H1 (cell line): ENCODE measurements at regions of chr13 and their contacts with region 1.

Region 1: DNA sequence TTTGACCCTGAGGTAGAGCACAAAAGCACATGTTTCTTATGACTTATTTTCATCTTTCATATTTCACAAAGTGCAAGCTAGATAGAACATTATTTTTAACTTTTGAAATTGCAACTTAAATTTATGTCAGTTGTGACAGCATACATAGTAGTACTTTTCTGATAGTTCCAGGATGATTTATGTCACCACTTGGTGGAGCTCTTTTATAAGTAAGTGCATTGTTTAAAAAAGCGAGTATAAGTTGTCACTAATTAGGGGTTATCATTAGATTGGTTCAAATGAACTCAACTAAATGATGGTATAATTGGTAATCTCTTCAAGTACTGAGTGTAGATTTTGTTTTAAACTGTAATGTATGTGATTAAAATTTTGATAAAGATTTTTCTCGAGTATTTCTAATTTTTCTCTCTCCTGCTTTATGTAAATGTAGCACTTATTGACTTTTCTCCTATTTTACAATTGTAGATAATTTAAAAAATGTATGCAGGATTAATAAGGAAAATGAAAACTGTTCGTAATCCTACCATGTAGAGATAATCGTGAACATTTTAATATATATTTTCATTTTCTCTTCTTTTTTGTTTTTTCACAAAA is 31.1 kb downstream of the RB1 start:
- DNase-seq: no peak
- H3K4me3 ChIP-seq: no peak overlapping the region
- H3K27ac ChIP-seq: no peak overlapping the region
- H3K4me1 ChIP-seq: no peaks in the 10 kb centered on the region
- H3K27me3 ChIP-seq: no peaks in the 10 kb centered on the region
- CTCF ChIP-seq: peak in 2 of 3 experiments; percentile 33 to 44; a peak in 2 of 4 replicates
- EP300 ChIP-seq: no peak
- POLR2A ChIP-seq: no peak
- RAD21 ChIP-seq: peak in 1 of 2 experiments; percentile 67

Region 2: GRCh38 chr13:48400850-48401291 is 66.2 kb after region 1 on chr13:
- CTCF ChIA-PET with region 1: no interaction called
- POLR2A ChIA-PET with region 1: no interaction called
- DNase-seq: no peak
- H3K4me3 ChIP-seq: no peak overlapping the region
- H3K27ac ChIP-seq: no peak overlapping the region
- H3K4me1 ChIP-seq: no peaks in the 10 kb centered on the region
- H3K27me3 ChIP-seq: no peaks in the 10 kb centered on the region
- CTCF ChIP-seq: no peak
- EP300 ChIP-seq: no peak
- POLR2A ChIP-seq: no peak
- RAD21 ChIP-seq: no peak

Region 3: GRCh38 chr13:48571126-48571913 is 236.7 kb after region 1 on chr13:
- CTCF ChIA-PET with region 1: interaction called, 105 read pairs
- POLR2A ChIA-PET with region 1: no interaction called
- DNase-seq: no peak
- H3K4me3 ChIP-seq: no peak overlapping the region
- H3K27ac ChIP-seq: no peak overlapping the region
- H3K4me1 ChIP-seq: no peaks in the 10 kb centered on the region; a peak in 1 of 7 replicates
- H3K27me3 ChIP-seq: no peaks in the 10 kb centered on the region
- CTCF ChIP-seq: no peak
- EP300 ChIP-seq: no peak
- POLR2A ChIP-seq: no peak
- RAD21 ChIP-seq: no peak

Region 4: GRCh38 chr13:48580185-48580803 is 245.7 kb after region 1 on chr13:
- CTCF ChIA-PET with region 1: interaction called, 105 read pairs
- POLR2A ChIA-PET with region 1: no interaction called
- DNase-seq: peak in 1 of 2 experiments; percentile 83
- H3K4me3 ChIP-seq: no peak overlapping the region
- H3K27ac ChIP-seq: no peak overlapping the region
- H3K4me1 ChIP-seq: peaks cover 0 to 3% (median under 1%) of the 10 kb centered on the region in 4 experiments; a peak in 3 of 7 replicates
- H3K27me3 ChIP-seq: no peaks in the 10 kb centered on the region
- CTCF ChIP-seq: peak in 2 of 3 experiments; percentile 51 to 54; a peak in 3 of 4 replicates
- EP300 ChIP-seq: no peak
- POLR2A ChIP-seq: no peak
- RAD21 ChIP-seq: peak; percentile 72 to 78

Region 5: GRCh38 chr13:48595431-48596429 is 261.1 kb after region 1 on chr13:
- CTCF ChIA-PET with region 1: interaction called, 12 read pairs
- POLR2A ChIA-PET with region 1: no interaction called
- DNase-seq: peak in 1 of 2 experiments; percentile 50
- H3K4me3 ChIP-seq: no peak overlapping the region
- H3K27ac ChIP-seq: no peak overlapping the region
- H3K4me1 ChIP-seq: peaks cover 8 to 25% (median 18%) of the 10 kb centered on the region in 4 experiments
- H3K27me3 ChIP-seq: no peaks in the 10 kb centered on the region
- CTCF ChIP-seq: peak; percentile 31 to 95 (median 57)
- EP300 ChIP-seq: no peak
- POLR2A ChIP-seq: no peak
- RAD21 ChIP-seq: peak; percentile 89 to 91